Activated T-helper 2 cell treated with anti-CD3 and anti-CD28 coated beads, Interferon-gamma antibody, Interleukin-2, Interleukin-4, amounts not matched to agents 10 μg/mL and 5 μg/mL and 100 μg/mL, durations not matched to agents 14 hours and 24 hours and 36 hours (primary cell): ENCODE measurements at regions of chr2 and their contacts with region 1.

Region 1: DNA sequence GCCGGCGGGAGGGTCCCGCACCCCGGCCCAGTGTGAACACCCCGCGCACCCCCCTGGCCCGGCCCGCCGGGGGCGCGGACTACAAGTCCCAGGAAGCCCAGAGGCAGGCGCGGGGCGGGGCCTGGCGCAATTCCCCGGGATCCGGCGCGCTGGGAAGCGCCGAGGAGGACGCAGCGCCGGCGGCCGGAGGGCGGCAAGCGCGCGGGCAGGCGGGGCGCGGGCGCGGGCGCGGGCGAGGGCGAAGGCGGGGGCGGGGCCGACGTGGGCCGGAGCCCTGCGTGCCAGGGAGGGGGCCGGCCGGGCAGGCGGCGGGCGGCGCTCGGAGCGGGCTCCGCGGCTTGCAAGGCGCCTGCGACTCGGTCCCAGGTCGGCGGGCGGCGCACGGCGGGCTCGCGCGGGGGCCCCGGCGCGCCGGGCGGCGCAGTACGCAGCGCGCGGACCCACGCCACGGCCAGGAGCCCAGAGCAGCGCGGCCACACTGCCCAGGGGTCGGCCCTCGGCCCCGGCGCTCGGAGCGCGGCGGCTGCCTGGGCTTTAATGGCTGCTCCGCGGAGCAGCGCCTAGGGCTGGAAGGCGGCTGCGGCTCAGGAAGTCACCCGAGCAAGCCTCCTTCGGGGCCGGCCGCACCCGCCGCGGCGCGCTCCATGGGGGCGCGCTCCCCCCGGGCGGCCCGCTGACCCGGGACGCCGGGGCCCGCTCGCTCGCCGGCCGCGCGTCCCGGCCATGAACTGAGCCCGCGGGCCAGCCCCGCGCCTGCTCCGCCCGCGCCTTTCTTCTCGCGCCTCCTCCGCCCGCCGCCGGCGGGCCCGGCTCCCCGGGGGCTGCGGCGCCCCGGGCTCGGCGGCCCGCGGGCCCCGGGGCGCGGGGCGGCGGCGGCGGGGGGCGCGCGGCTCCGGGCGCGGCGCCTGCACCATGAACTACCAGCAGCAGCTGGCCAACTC is at the start of gene AGAP1:
- DNase-seq: no peak
- H3K4me3 Mint-ChIP-seq: peak within 1 kb of the TSS; percentile 84
- H3K27ac Mint-ChIP-seq: no peak within 1 kb of the TSS
- H3K4me1 Mint-ChIP-seq: peaks cover 2% of the 10 kb centered on the region
- H3K27me3 Mint-ChIP-seq: peaks cover 53% of the 10 kb centered on the region
- total RNA-seq, gene AGAP1: 1.8 and 2.2 TPM in 2 replicates

Region 2: DNA sequence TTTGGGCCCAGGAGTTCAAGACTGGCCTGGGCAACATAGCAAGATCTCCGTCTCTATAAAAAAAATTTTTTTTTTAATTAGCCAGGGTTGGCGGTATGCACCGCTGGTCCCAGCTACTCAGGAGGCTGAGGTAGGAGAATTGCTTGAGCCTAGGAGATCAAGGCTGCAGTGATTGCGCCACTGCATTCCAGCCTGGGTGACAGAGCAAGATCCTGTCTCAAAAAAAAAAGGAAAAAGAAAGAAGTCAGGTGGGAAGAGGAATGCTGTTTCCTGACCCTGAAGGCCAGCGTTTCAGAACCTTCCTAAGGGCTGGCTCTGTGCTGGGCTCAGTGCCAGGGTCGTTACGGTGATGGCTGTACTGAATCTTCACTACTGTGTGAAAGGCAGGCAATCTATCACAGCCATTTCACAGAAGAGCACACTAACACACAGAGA is 35.2 kb before region 1 on chr2:
- intact Hi-C with region 1: no loop called
- DNase-seq: no peak
- H3K4me3 Mint-ChIP-seq: no peak overlapping the region
- H3K27ac Mint-ChIP-seq: no peak overlapping the region
- H3K4me1 Mint-ChIP-seq: no peaks in the 10 kb centered on the region
- H3K27me3 Mint-ChIP-seq: no peaks in the 10 kb centered on the region

Region 3: GRCh38 chr2:235669269-235669831 is 175.3 kb after region 1 on chr2:
- intact Hi-C with region 1: loop called (anchors 10 kb)
- DNase-seq: no peak
- H3K4me3 Mint-ChIP-seq: no peak overlapping the region
- H3K27ac Mint-ChIP-seq: no peak overlapping the region
- H3K4me1 Mint-ChIP-seq: peaks cover 1% of the 10 kb centered on the region
- H3K27me3 Mint-ChIP-seq: peaks cover 62% of the 10 kb centered on the region

Region 4: DNA sequence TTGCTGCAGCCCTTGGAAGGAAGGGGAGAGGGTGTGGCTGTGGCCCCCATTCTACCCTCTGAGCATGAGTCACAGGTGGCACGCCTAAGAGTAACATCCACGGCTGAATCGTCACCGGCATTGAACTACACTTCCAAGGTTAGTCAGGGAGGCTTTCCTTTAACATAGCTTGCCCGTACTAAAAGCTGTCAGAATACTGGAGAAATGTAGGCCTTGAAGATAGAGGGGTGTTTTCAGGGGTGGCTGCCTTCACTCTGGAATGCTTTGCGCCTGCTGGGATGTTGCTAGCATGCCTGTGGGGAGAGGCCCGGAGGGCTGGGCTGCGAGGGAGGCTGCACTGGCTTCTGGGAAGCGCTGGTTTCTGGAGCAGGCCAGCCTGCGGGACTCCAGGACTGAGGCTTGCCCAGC is 333.5 kb after region 1 on chr2:
- intact Hi-C with region 1: no loop called
- DNase-seq: no peak
- H3K4me3 Mint-ChIP-seq: no peak overlapping the region
- H3K27ac Mint-ChIP-seq: no peak overlapping the region
- H3K4me1 Mint-ChIP-seq: no peaks in the 10 kb centered on the region
- H3K27me3 Mint-ChIP-seq: no peaks in the 10 kb centered on the region